ENCODE measurements at regions of chr2 and their contacts with region 1.

Region 1: DNA sequence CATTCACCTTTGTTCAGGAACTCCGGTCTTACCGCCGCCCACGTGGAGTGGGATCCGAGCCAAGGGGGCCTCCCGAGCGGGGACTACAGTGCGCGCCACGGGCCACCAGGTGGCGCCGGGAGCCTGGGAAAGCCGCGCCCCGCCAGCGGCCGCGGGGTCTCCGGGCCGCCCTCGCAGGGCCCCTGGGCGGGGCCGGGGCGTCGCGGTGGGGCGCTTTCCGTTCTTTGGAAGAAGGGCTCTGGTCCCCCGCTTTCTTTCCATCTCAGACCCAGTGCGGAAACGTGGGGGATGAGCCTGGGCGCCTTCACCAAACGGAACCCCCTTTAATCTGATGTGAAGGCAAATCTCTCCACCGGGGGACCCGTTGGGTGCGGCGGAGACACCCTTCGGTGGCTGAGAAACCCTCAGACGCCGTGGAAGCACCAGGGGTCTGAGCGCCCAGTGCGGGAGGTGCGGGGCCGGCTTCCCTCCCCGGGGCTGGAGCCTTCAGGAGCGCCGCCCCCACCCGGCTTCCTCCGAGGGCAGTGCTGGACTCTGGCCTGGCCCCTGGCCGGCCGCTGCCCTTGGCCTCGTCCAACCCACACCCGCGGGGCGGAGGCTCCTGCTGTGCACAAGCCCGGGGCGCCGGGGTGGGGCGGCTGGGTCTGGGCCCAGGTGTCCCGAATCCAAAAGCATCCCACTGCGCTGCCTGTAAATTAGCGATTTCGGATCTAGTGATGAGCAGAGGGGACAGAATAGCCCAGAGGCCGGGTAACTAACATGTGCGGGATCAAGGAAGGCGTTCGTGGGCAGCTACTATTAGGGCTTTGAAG is 44.6 kb downstream of the GORASP2 start:
- DNase-seq: peak; percentile 93
- ATAC-seq: peak; percentile 93
- H3K4me3 Mint-ChIP-seq: peak overlapping the region; percentile 67
- H3K27ac Mint-ChIP-seq: peak overlapping the region; percentile 80
- H3K4me1 Mint-ChIP-seq: peaks cover 10% of the 10 kb centered on the region
- H3K27me3 Mint-ChIP-seq: no peaks in the 10 kb centered on the region

Region 2: GRCh38 chr2:170063456-170064235 is 910.1 kb before region 1 on chr2:
- CTCF ChIA-PET with region 1: no interaction called
- POLR2A ChIA-PET with region 1: no interaction called
- intact Hi-C with region 1: no loop called
- DNase-seq: no peak
- ATAC-seq: no peak
- H3K4me3 Mint-ChIP-seq: no peak overlapping the region
- H3K27ac Mint-ChIP-seq: no peak overlapping the region
- H3K4me1 Mint-ChIP-seq: no peaks in the 10 kb centered on the region
- H3K27me3 Mint-ChIP-seq: no peaks in the 10 kb centered on the region

Region 3: DNA sequence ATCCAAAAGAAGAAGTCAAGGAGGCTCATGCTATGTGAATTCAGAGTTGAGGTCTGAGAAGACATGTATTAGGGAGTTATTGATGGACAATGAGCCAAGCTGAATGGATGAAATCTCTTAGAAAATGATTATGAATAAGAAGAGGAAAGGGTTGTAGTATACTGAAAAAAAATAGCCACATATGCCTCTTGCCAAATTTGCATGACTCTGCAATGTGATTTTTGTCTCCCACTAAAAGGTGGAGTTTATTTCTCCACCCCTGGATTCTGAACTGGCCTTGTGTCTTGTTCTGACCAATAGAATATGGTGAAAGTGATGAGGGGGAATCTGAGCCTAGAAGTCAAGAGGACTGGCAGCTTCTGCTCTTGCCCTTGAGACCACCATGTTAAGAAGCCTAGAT is 212.1 kb before region 1 on chr2:
- CTCF ChIA-PET with region 1: no interaction called
- POLR2A ChIA-PET with region 1: no interaction called
- intact Hi-C with region 1: no loop called
- DNase-seq: no peak
- ATAC-seq: no peak
- H3K4me3 Mint-ChIP-seq: no peak overlapping the region
- H3K27ac Mint-ChIP-seq: no peak overlapping the region
- H3K4me1 Mint-ChIP-seq: peaks cover 10% of the 10 kb centered on the region
- H3K27me3 Mint-ChIP-seq: no peaks in the 10 kb centered on the region

Region 4: DNA sequence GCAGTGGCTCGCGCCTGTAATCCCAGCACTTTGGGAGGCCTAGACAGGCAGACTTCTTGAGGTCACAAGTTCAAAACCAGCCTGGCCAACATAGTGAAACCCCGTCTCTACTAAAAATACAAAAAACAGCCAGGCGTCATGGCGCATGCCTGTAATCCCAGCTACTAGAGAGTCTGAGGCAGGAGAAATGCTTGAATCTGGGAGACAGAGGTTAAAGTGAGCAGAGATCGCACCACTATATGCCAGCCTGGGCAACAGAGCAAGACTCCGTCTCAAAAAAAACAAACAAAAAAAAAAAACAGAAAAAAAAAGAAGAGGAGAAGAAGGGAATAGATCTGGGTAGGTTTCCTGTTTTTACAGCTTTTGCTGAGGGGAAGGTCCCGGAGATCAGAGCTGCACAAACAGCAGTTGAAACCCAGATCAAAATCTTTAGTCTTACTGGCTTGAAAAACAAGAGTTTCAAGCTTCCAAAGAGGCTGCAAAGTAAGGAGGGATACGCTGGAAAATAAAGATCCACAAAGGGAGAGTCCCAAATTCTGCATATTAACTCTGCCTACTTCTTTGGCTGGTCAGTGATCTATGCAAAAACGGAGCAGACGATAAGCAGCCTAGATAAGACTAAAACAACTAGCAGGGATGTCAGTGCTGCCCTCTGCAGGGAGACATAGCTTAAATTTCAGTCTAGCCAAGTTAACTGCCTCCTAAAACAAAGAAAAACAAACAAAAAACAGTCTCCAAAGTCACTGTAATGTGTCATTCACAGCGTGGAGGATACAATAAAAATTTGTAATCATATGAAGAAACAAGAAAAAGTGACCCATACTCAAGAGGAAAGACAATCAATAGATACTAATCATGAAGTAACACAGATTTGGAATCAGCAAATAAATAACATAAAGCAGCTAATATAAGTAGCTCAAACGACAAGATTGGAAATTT is 112.9 kb after region 1 on chr2:
- CTCF ChIA-PET with region 1: interaction called, 19 read pairs
- POLR2A ChIA-PET with region 1: no interaction called
- intact Hi-C with region 1: loop called (anchors 1 to 2 kb)
- DNase-seq: peak; percentile 79
- ATAC-seq: peak; percentile 75
- H3K4me3 Mint-ChIP-seq: peak overlapping the region; percentile 69
- H3K27ac Mint-ChIP-seq: peak overlapping the region; percentile 73
- H3K4me1 Mint-ChIP-seq: peaks cover 71% of the 10 kb centered on the region
- H3K27me3 Mint-ChIP-seq: no peaks in the 10 kb centered on the region

Region 5: DNA sequence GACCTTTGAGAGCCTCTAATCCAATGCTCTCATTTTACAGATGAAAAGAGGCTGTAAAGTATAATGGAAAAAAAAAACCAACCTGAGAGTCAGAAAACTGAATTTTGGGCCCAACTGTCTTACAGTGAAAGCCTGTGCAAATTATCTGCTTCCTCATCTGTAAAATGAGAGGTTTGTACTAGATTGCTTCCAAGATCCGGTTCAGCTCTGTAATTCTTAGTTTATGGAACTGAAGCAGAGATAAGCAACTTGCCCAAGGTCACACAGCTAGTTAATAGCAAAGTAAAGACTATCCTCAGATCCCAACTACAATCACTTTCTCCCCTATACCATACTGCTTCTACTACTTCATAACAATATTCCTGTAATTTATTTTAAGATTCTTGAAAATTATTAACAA is 180.7 kb after region 1 on chr2:
- CTCF ChIA-PET with region 1: interaction called, 11 read pairs
- POLR2A ChIA-PET with region 1: interaction called, 3 read pairs
- intact Hi-C with region 1: loop called (anchors 1 kb)
- DNase-seq: no peak
- ATAC-seq: no peak
- H3K4me3 Mint-ChIP-seq: no peak overlapping the region
- H3K27ac Mint-ChIP-seq: no peak overlapping the region
- H3K4me1 Mint-ChIP-seq: peaks cover 77% of the 10 kb centered on the region
- H3K27me3 Mint-ChIP-seq: no peaks in the 10 kb centered on the region

Region 6: GRCh38 chr2:171253900-171254655 is 280.4 kb after region 1 on chr2:
- CTCF ChIA-PET with region 1: no interaction called
- POLR2A ChIA-PET with region 1: no interaction called
- intact Hi-C with region 1: loop called in 1 of 2 experiments (anchors 5 kb)
- DNase-seq: no peak
- ATAC-seq: no peak
- H3K4me3 Mint-ChIP-seq: no peak overlapping the region
- H3K27ac Mint-ChIP-seq: no peak overlapping the region
- H3K4me1 Mint-ChIP-seq: peaks cover 14% of the 10 kb centered on the region
- H3K27me3 Mint-ChIP-seq: no peaks in the 10 kb centered on the region

Region 7: DNA sequence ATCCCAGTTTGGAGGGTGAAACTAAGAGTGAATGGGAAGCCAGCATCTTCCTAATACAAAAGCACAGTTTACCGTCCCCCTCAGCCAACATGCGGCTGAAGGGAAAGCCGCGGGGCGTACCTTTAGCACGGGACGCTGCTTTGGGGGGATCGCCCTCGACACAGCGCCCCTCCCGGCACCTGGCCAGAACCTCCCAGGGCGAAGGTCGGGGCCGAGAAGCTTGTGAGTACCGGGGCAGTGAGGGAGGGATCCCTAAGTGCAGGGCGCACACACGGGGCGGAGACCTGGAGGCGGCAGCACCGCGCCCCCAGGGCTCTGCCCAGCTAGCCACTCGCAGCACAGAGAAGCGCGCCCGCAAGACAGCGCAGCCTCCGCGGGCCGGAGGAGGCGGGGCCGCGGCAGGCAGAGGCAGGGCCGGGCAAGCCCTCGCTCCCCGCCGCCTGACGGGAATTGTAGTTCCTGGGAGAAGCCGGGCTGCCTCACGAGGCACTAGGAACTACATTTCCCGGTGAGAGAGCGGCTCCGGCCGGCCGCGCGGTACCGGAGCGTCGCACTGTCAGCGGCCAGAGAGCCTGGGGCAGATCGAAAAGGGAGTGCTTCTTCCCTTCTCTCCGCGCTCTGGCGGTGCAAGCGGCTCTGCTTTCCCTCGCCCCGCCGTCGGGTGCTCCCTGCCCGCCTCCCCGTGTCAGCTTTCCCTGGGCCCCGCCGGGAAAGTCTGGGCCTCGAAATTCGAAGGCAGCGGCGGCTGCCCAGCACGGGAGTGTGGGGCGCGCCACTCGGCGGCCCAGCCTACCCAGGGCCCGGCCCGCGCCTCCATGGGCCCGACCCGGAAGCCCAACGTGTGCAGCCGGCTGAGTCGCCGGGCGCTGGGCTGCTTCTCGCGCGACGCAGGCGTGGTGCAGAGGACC is 460.3 kb after region 1 on chr2 and contains the starts of genes DCAF17 and METTL8:
- CTCF ChIA-PET with region 1: interaction called, 6 read pairs
- POLR2A ChIA-PET with region 1: no interaction called
- intact Hi-C with region 1: loop called (anchors 1 kb)
- DNase-seq: peak; percentile 97
- ATAC-seq: peak; percentile 91
- H3K4me3 Mint-ChIP-seq: peak within 1 kb of the TSS; percentile 93
- H3K27ac Mint-ChIP-seq: peak within 1 kb of the TSS; percentile 95
- H3K4me1 Mint-ChIP-seq: peaks cover 50% of the 10 kb centered on the region
- H3K27me3 Mint-ChIP-seq: no peaks in the 10 kb centered on the region
- total RNA-seq, gene DCAF17: 18.3 TPM
- total RNA-seq, gene METTL8: 39.5 to 47.9 TPM

Region 8: GRCh38 chr2:171553858-171554257 is 580.2 kb after region 1 on chr2:
- CTCF ChIA-PET with region 1: no interaction called
- POLR2A ChIA-PET with region 1: no interaction called
- intact Hi-C with region 1: loop called in 1 of 2 experiments (anchors 10 kb)
- DNase-seq: no peak
- ATAC-seq: no peak
- H3K4me3 Mint-ChIP-seq: no peak overlapping the region
- H3K27ac Mint-ChIP-seq: no peak overlapping the region
- H3K4me1 Mint-ChIP-seq: peaks cover 3% of the 10 kb centered on the region
- H3K27me3 Mint-ChIP-seq: no peaks in the 10 kb centered on the region

Region 9: GRCh38 chr2:172710584-172711024 is 1736.9 kb after region 1 on chr2:
- CTCF ChIA-PET with region 1: no interaction called
- POLR2A ChIA-PET with region 1: no interaction called
- intact Hi-C with region 1: no loop called
- DNase-seq: peak; percentile 62
- ATAC-seq: no peak
- H3K4me3 Mint-ChIP-seq: no peak overlapping the region
- H3K27ac Mint-ChIP-seq: no peak overlapping the region
- H3K4me1 Mint-ChIP-seq: no peaks in the 10 kb centered on the region
- H3K27me3 Mint-ChIP-seq: peaks cover 5% of the 10 kb centered on the region